Right cardiac atrium (tissue), 5 donors: ENCODE measurements at regions of chr9 and their contacts with region 1.

Region 1: GRCh38 chr9:133459476-133460404 is at the start of gene CACFD1:
- DNase-seq: peak; percentile 97 to 99 (median 99)
- ATAC-seq: peak; percentile 94 to 95
- H3K4me3 ChIP-seq: peak within 1 kb of the TSS; percentile 80
- H3K27ac ChIP-seq: peak within 1 kb of the TSS; percentile 88
- H3K4me1 ChIP-seq: peaks cover 3% of the 10 kb centered on the region
- H3K27me3 ChIP-seq: no peaks in the 10 kb centered on the region
- total RNA-seq, gene CACFD1: 10.8 to 13.9 (median 13.8) TPM

Region 2: DNA sequence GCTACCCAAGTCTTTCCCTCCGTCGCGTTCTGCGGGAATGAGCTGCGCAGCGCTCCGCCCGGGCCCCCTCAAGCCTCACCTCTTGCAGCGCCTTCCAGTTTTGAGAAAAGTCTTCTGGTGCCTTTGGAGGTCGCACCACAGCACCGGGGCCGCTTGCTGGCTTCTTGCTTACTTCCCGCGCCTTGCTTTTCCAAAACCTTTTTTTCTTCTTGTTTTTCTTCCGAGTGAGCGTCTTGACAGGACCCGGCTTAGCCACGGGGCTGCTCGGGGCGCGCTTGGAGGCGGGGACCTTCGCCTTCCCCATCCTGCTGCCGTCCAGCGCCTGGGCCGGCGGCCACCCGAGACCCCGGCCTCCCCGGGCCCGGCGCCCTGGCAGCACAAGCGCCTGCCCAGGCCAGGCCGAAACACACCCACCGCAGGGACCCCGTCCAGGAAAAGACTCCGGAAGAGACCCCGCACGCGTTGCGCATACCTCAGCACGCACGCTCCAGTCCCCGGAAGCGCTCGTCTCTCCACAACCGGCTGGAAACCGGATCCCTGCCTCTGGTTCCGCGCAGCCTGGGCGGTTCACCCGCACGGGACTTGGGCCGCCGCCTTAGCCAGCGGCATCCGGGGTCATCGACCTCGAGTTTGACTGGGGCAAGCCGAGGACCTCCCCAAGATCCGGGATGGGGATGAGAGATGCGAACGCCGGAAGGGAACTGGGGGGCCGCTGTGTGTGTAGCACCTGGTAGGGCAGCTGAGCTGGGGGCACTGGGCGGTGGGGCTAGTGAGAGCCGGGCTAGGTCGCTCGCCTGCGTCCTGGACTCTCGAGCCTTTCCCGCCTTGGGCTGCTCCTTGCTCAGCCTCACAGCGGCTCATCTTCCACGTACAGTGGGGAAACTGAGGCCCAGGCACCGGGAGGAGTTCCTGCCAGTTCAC is 41.9 kb before region 1 on chr9 and contains the start of gene REXO4:
- intact Hi-C with region 1: loop called in 1 of 4 experiments (anchors 10 kb)
- DNase-seq: peak; percentile 84 to 93 (median 91)
- ATAC-seq: peak; percentile 95 to 96
- H3K4me3 ChIP-seq: peak within 1 kb of the TSS; percentile 70
- H3K27ac ChIP-seq: peak within 1 kb of the TSS; percentile 58
- H3K4me1 ChIP-seq: no peaks in the 10 kb centered on the region
- H3K27me3 ChIP-seq: no peaks in the 10 kb centered on the region
- total RNA-seq, gene REXO4: 11.9 to 16.3 (median 15.0) TPM